ENCODE measurements at regions of chrX and their contacts with region 1.

Region 1: GRCh38 chrX:41863343-41864203 is 59.8 kb downstream of the CASK start:
- DNase-seq: peak in 1 of 9 experiments; percentile 13
- ATAC-seq: no peak
- H3K4me3 ChIP-seq: no peak overlapping the region
- H3K4me3 Mint-ChIP-seq: peak overlapping the region; percentile 37
- H3K27ac ChIP-seq: peak overlapping the region in 1 of 2 experiments; percentile 44
- H3K27ac Mint-ChIP-seq: peak overlapping the region; percentile 94
- H3K4me1 ChIP-seq: peaks cover 25% of the 10 kb centered on the region
- H3K4me1 Mint-ChIP-seq: peaks cover 61% of the 10 kb centered on the region
- H3K27me3 ChIP-seq: no peaks in the 10 kb centered on the region
- H3K27me3 Mint-ChIP-seq: no peaks in the 10 kb centered on the region
- CTCF ChIP-seq: no peak

Region 2: GRCh38 chrX:41895826-41896225 is 32.3 kb after region 1 on chrX:
- CTCF ChIA-PET with region 1: no interaction called
- POLR2A ChIA-PET with region 1: no interaction called
- intact Hi-C with region 1: loop called in 1 of 2 experiments (anchors 5 kb)
- DNase-seq: no peak
- ATAC-seq: no peak
- H3K4me3 ChIP-seq: no peak overlapping the region
- H3K4me3 Mint-ChIP-seq: no peak overlapping the region
- H3K27ac ChIP-seq: no peak overlapping the region
- H3K27ac Mint-ChIP-seq: no peak overlapping the region
- H3K4me1 ChIP-seq: no peaks in the 10 kb centered on the region
- H3K4me1 Mint-ChIP-seq: no peaks in the 10 kb centered on the region
- H3K27me3 ChIP-seq: no peaks in the 10 kb centered on the region
- H3K27me3 Mint-ChIP-seq: no peaks in the 10 kb centered on the region
- CTCF ChIP-seq: no peak

Region 3: DNA sequence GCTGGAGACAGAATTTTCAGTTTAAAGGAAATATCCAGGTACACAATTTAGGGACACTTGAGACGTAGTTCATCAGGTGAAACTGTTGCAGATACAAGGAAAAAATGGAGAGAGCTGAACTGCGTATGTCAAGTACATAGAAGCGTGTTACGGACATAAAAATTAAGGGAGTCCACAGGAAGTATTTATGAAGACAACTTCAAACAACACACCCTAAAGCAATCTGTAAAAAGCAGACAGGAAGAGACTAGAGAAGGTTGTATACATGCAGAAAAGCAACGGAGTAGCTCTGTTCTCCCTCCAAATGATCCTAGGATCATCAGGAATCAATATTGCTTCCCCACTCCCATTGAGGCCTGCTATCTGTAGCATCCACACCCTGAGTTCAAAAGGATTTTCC is 53.9 kb after region 1 on chrX:
- CTCF ChIA-PET with region 1: no interaction called
- POLR2A ChIA-PET with region 1: no interaction called
- intact Hi-C with region 1: loop called in 1 of 2 experiments (anchors 5 kb)
- DNase-seq: peak in 1 of 9 experiments; percentile 39
- ATAC-seq: peak; percentile 53
- H3K4me3 ChIP-seq: peak overlapping the region in 1 of 2 experiments; percentile 24
- H3K4me3 Mint-ChIP-seq: peak overlapping the region; percentile 78
- H3K27ac ChIP-seq: peak overlapping the region; percentile 9 to 40
- H3K27ac Mint-ChIP-seq: peak overlapping the region; percentile 90
- H3K4me1 ChIP-seq: peaks cover 15% of the 10 kb centered on the region
- H3K4me1 Mint-ChIP-seq: peaks cover 74% of the 10 kb centered on the region
- H3K27me3 ChIP-seq: no peaks in the 10 kb centered on the region
- H3K27me3 Mint-ChIP-seq: no peaks in the 10 kb centered on the region
- CTCF ChIP-seq: no peak